WTC11 (cell line): ENCODE measurements at regions of chr15 and their contacts with region 1.

Region 1: GRCh38 chr15:40893733-40894688 is at the start of gene VPS18:
- DNase-seq: peak; percentile 99
- ATAC-seq: peak; percentile 92
- H3K4me3 Mint-ChIP-seq: peak within 1 kb of the TSS; percentile 97
- H3K27ac Mint-ChIP-seq: peak within 1 kb of the TSS; percentile 99
- H3K4me1 Mint-ChIP-seq: peaks cover 13% of the 10 kb centered on the region
- H3K27me3 Mint-ChIP-seq: peaks cover 17% of the 10 kb centered on the region
- CTCF ChIP-seq: peak; percentile 96
- total RNA-seq, gene VPS18: 22.0 to 27.3 TPM (median 24.1 TPM) in 3 replicates

Region 2: GRCh38 chr15:40694688-40695468 is 199.1 kb before region 1 on chr15 and contains the start of gene RAD51:
- CTCF ChIA-PET with region 1: interaction called, 13 read pairs
- POLR2A ChIA-PET with region 1: interaction called, 13 read pairs
- DNase-seq: peak; percentile 93
- ATAC-seq: peak; percentile 92
- H3K4me3 Mint-ChIP-seq: peak within 1 kb of the TSS; percentile 97
- H3K27ac Mint-ChIP-seq: peak within 1 kb of the TSS; percentile 100
- H3K4me1 Mint-ChIP-seq: peaks cover 10% of the 10 kb centered on the region
- H3K27me3 Mint-ChIP-seq: no peaks in the 10 kb centered on the region
- CTCF ChIP-seq: no peak
- total RNA-seq, gene RAD51: 29.7 to 36.4 TPM (median 31.0 TPM) in 3 replicates

Region 3: GRCh38 chr15:40782580-40783227 is 111.3 kb before region 1 on chr15:
- CTCF ChIA-PET with region 1: interaction called, 21 read pairs
- POLR2A ChIA-PET with region 1: interaction called, 3 read pairs
- DNase-seq: peak; percentile 75
- ATAC-seq: peak; percentile 74
- H3K4me3 Mint-ChIP-seq: no peak overlapping the region
- H3K27ac Mint-ChIP-seq: peak overlapping the region; percentile 54
- H3K4me1 Mint-ChIP-seq: peaks cover 37% of the 10 kb centered on the region
- H3K27me3 Mint-ChIP-seq: no peaks in the 10 kb centered on the region
- CTCF ChIP-seq: no peak

Region 4: DNA sequence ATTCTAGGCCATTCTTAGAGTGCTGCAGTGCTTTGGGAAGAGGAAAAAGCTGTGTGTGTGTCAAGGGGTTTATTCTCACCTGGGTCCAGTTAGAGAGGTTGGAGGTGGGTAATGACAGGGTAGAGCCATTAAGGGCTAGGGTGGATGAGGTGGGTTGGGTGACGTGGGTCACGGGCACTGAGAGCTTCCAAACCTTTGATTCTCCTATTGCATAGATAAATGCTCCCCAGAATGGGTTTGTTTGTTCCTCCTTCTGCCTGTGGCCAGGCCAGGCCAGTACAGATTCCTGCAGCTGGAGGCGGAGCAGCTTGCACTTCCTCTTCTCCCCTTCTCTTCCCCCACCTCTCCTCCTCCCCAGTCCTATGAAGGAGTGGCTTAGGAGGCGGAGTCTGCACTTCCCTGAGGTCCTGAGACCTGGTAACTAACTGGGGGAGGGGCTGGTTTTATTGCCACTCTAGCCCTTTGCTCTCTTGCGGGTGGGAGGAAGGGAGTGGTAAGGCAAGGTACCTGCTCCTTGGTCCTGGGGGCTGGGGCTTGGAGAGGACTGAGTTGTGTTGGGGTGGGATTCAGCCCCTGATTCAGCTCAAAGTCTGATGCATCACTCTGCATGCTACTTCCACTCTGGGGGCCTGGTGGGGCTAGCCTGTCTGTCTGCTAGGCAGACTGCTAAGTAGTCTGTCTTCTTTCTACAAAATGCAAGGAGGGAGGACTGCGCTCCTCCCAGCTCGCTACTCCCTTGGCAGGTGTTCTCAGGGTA is 46.6 kb before region 1 on chr15:
- CTCF ChIA-PET with region 1: interaction called, 44 read pairs
- POLR2A ChIA-PET with region 1: interaction called, 15 read pairs
- DNase-seq: no peak
- ATAC-seq: peak; percentile 27
- H3K4me3 Mint-ChIP-seq: peak overlapping the region; percentile 93
- H3K27ac Mint-ChIP-seq: peak overlapping the region; percentile 57
- H3K4me1 Mint-ChIP-seq: peaks cover 41% of the 10 kb centered on the region
- H3K27me3 Mint-ChIP-seq: no peaks in the 10 kb centered on the region
- CTCF ChIP-seq: no peak

Region 5: DNA sequence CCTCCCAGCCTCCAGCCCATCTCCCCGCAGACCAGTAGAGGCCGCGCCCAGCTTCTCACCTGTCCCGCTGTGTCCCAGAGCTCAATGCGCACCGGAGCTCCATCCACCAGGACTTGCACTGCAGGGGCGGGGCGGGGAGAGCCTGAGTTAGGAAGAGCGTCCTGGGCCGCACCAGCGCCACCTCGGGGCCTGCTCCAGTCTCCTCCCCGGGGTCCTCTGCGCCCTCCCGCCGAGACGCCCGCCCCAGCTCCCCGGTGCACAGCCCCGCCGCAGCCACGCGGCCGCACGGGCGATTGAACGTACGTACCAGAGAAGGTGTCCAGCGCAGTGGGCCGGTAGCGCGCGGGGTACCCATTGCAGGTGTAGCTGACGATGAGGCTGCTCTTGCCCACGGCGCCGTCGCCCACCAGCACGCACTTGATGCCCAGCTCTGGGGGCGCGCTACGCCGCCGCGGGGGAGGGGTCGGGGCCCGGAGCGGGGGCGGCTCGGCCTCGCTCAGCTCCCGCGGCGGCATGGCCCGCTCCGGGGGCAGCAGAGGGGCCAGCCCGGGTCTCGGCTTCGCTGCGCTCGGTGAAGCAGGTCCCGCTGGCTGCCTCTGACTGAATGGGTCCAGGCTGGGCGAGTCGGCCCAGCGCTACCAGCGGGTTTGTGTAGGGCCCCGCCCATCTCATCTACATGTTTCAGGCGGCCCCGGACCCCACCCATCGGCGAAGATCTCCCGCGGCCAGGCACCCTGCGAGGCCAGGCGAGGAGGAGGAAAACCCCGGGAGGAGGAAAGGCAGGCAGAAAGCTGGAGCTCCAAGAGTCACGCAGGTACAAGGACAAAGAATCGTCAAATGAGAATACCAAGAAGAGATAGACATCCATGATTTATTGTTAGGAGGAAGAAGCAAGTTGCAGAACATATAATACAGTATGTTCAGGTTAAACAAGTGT is 20.1 kb before region 1 on chr15 and contains the start of gene RHOV:
- CTCF ChIA-PET with region 1: interaction called, 115 read pairs
- POLR2A ChIA-PET with region 1: interaction called, 18 read pairs
- DNase-seq: peak; percentile 89
- ATAC-seq: peak; percentile 80
- H3K4me3 Mint-ChIP-seq: peak within 1 kb of the TSS; percentile 79
- H3K27ac Mint-ChIP-seq: no peak within 1 kb of the TSS; the same call in none of the 2 replicates
- H3K4me1 Mint-ChIP-seq: peaks cover 36% of the 10 kb centered on the region
- H3K27me3 Mint-ChIP-seq: peaks cover 4% of the 10 kb centered on the region; the same call in 1 of the 2 replicates
- CTCF ChIP-seq: no peak
- total RNA-seq, gene RHOV: 5.0 to 5.4 TPM (median 5.1 TPM) in 3 replicates

Region 6: DNA sequence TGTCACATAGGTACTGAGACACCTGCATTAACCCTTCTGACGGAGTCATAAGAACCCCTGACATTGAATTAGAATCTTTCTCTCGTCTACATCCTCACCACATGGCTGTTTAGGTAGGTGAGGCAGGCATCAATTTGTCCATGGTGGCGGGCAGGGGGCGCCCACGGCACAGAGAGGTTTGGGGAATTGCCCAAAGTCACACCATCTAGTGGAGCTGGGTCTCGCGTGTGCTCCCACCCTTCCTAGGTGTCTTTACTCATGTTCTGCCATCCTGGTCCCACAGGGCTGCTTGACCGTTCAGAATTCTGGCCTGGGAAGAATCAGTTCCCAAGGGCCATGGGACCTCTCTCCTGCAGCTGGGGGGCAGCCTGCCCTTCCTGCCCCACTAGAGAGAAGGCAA is 20.5 kb after region 1 on chr15:
- CTCF ChIA-PET with region 1: interaction called, 19 read pairs
- POLR2A ChIA-PET with region 1: no interaction called
- DNase-seq: no peak
- ATAC-seq: peak; percentile 31
- H3K4me3 Mint-ChIP-seq: no peak overlapping the region
- H3K27ac Mint-ChIP-seq: 0 out of 2 replicates have a peak overlapping the region, but pooled peaks have one; percentile 1
- H3K4me1 Mint-ChIP-seq: peaks cover 22% of the 10 kb centered on the region
- H3K27me3 Mint-ChIP-seq: 0 out of 2 replicates have a peak, but pooled peaks cover 2% of the 10 kb centered on the region
- CTCF ChIP-seq: no peak

Region 7: GRCh38 chr15:41066516-41066915 is 172.5 kb after region 1 on chr15:
- CTCF ChIA-PET with region 1: no interaction called
- POLR2A ChIA-PET with region 1: no interaction called
- DNase-seq: no peak
- ATAC-seq: no peak
- H3K4me3 Mint-ChIP-seq: no peak overlapping the region
- H3K27ac Mint-ChIP-seq: no peak overlapping the region
- H3K4me1 Mint-ChIP-seq: no peaks in the 10 kb centered on the region
- H3K27me3 Mint-ChIP-seq: no peaks in the 10 kb centered on the region
- CTCF ChIP-seq: no peak